ENCODE measurements at regions of chr3 and their contacts with region 1.

Region 1: GRCh38 chr3:16511681-16512434 is 1.6 kb downstream of the RFTN1 start:
- DNase-seq: peak in 2 of 10 donors; percentile 23 to 54

Region 2: DNA sequence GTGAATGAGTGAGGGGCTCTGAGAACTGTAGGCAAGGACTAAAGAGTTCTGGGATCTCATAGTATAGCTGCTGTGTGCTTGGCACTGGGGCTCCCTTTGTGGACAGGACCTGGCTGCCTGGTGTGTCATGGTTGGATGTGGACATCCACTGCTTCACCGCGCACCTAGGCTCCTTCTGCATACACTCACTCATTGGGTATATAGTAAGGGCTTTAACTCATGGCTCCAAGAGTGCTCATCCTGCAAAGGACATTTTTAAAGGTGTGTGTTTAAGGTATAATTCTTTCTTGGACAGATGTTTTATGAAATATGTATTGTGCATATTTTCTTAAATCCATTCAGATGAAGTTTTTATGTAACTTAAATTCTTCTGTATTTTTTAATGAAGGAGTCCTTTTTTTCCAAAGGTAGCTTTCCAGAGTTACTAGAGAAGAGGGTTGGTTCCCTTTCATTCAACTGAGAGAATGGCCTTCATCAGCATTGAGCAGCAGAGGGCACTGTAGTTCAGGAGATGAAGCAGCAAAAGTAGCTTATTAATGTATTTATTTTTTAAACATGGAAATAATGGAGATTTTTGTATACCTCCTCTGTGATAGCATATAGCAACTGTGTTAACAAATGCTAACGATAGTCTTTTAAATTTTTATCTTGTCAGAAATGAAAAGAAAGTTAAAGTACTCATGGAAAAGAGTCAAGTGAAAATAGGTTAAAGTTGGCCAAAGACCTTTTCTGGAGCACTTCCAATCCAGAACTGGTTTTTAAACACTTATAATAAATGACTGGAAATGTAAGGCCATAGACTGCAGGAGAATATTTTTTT is 221.6 kb before region 1 on chr3:
- intact Hi-C with region 1: loop called (anchors 10 kb)
- DNase-seq: peak in 5 of 10 donors; percentile 39 to 65 (median 54)

Measured in posterior cingulate gyrus (tissue), 11 donors.